Naive thymus-derived CD4-positive, alpha-beta T cell (primary cell): ENCODE measurements at regions of chr7 and their contacts with region 1.

Region 1: GRCh38 chr7:73578342-73579127 is at the start of gene TBL2:
- DNase-seq: peak; percentile 98 to 99 (median 98)
- ATAC-seq: peak; percentile 94
- H3K4me3 ChIP-seq: peak within 1 kb of the TSS; percentile 61
- H3K4me3 Mint-ChIP-seq: peak within 1 kb of the TSS; percentile 91 to 98 (median 96)
- H3K27ac ChIP-seq: peak within 1 kb of the TSS; percentile 88
- H3K27ac Mint-ChIP-seq: peak within 1 kb of the TSS; percentile 97 to 99 (median 98)
- H3K4me1 ChIP-seq: peaks cover 13 to 14% of the 10 kb centered on the region in 2 donors
- H3K4me1 Mint-ChIP-seq: peaks cover 14 to 35% (median 31%) of the 10 kb centered on the region in 7 donors
- H3K27me3 ChIP-seq: no peaks in the 10 kb centered on the region
- H3K27me3 Mint-ChIP-seq: no peaks in the 10 kb centered on the region
- total RNA-seq, gene TBL2: 19.2 to 40.9 (median 32.8) TPM

Region 2: GRCh38 chr7:73557108-73557396 is 21.5 kb before region 1 on chr7:
- CTCF ChIA-PET with region 1: no interaction called
- POLR2A ChIA-PET with region 1: interaction called, 33 read pairs
- intact Hi-C with region 1: loop called (anchors 1 kb)
- DNase-seq: peak; percentile 86 to 95 (median 91)
- ATAC-seq: peak; percentile 93
- H3K4me3 ChIP-seq: peak overlapping the region; percentile 81
- H3K4me3 Mint-ChIP-seq: peak overlapping the region; percentile 88 to 97 (median 93)
- H3K27ac ChIP-seq: peak overlapping the region; percentile 100
- H3K27ac Mint-ChIP-seq: peak overlapping the region; percentile 92 to 98 (median 95)
- H3K4me1 ChIP-seq: peaks cover 17 to 23% of the 10 kb centered on the region in 2 donors
- H3K4me1 Mint-ChIP-seq: peaks cover 24 to 41% (median 33%) of the 10 kb centered on the region in 7 donors
- H3K27me3 ChIP-seq: no peaks in the 10 kb centered on the region
- H3K27me3 Mint-ChIP-seq: no peaks in the 10 kb centered on the region

Region 3: DNA sequence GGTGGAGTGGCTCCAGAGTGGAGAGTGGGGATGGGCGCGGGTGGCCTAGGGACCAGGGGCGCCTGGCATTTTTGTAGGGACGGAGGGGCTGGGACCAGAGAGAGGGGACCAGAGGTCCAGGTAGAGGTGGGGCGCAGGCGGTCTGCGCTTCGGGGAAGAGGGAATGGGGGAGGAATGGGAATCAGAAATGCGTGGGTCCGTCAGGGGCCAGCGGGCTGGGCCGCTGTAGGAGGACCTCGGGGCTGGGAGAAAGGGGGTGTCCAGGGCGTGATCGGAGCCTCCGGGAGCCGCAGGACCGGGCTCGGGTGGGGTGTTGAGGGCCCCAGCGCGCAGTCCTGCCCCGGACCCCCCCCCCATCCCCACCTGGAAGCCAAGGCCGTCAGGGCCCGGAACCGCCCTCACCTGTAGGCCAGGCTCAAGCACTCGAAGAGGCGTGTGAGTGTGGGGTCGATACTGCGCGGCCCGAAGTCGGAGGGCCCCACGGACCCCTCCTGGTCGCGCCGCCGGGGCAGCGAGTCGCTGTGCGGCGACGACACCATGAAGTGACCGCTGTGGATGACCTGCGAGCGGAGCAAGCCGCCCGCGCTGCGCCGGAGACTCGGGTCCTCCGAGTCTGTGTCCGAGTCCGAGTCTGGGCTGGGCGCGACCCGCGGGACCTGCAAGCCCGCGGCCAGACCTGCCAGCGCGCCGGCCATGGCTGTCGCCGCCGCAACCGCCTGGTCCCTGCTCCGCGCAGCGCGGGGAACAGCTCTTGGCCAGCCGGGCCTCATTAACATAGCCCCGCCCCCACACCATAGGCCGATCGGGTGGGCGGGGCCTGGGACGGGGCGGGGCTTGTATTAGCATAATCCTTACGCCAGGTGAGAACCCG is 45.5 kb after region 1 on chr7 and contains the start of gene MLXIPL:
- CTCF ChIA-PET with region 1: no interaction called
- POLR2A ChIA-PET with region 1: no interaction called
- intact Hi-C with region 1: loop called in 1 of 2 experiments (anchors 1 kb)
- DNase-seq: peak in 7 of 9 donors; percentile 16 to 68 (median 30)
- ATAC-seq: peak; percentile 89
- H3K4me3 ChIP-seq: no peak within 1 kb of the TSS
- H3K4me3 Mint-ChIP-seq: peak within 1 kb of the TSS; percentile 25 to 78 (median 60)
- H3K27ac ChIP-seq: no peak within 1 kb of the TSS
- H3K27ac Mint-ChIP-seq: peak within 1 kb of the TSS in 1 of 9 donors; percentile 50
- H3K4me1 ChIP-seq: no peaks in the 10 kb centered on the region
- H3K4me1 Mint-ChIP-seq: peaks cover 0 to 9% (median 5%) of the 10 kb centered on the region in 7 donors
- H3K27me3 ChIP-seq: peaks cover 0 to 10% of the 10 kb centered on the region in 2 donors
- H3K27me3 Mint-ChIP-seq: peaks cover 38 to 74% (median 44%) of the 10 kb centered on the region in 5 donors
- total RNA-seq, gene MLXIPL: not detected

Region 4: GRCh38 chr7:73683056-73683964 is 104.8 kb after region 1 on chr7 and contains the starts of genes BUD23 and DNAJC30:
- CTCF ChIA-PET with region 1: no interaction called
- POLR2A ChIA-PET with region 1: interaction called, 4 read pairs
- intact Hi-C with region 1: loop called (anchors 1 to 2 kb)
- DNase-seq: peak; percentile 77 to 97 (median 88)
- ATAC-seq: peak; percentile 98
- H3K4me3 ChIP-seq: peak within 1 kb of the TSS; percentile 97
- H3K4me3 Mint-ChIP-seq: peak within 1 kb of the TSS; percentile 91 to 98 (median 96)
- H3K27ac ChIP-seq: peak within 1 kb of the TSS; percentile 91
- H3K27ac Mint-ChIP-seq: peak within 1 kb of the TSS; percentile 91 to 97 (median 95)
- H3K4me1 ChIP-seq: peaks cover 17% of the 10 kb centered on the region in 2 donors
- H3K4me1 Mint-ChIP-seq: peaks cover 17 to 62% (median 42%) of the 10 kb centered on the region in 7 donors
- H3K27me3 ChIP-seq: no peaks in the 10 kb centered on the region
- H3K27me3 Mint-ChIP-seq: no peaks in the 10 kb centered on the region
- total RNA-seq, gene BUD23: 50.5 to 107 (median 72.0) TPM
- total RNA-seq, gene DNAJC30: 9.5 to 22.4 (median 13.4) TPM

Region 5: DNA sequence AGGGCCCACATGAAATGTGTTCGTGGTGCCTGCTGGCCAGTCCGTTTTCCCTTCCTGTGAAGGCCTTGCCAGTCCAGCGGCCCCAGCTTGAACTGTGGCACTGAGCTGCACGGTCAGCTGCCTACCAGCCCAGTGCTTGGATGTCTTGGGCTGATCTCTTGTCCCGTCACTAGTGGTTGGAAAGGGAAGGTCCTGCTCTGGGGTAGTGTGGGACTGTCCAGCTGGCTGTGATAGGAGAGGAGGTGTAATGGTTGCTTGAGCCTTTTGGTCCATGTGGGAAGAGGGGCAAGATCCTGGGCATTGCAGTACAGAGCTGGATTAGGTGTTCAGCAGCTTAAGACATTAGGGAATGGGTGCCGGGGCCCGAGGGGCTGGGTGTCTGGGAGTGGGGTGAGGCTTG is 119.9 kb after region 1 on chr7:
- CTCF ChIA-PET with region 1: no interaction called
- POLR2A ChIA-PET with region 1: no interaction called
- intact Hi-C with region 1: no loop called
- DNase-seq: no peak
- ATAC-seq: no peak
- H3K4me3 ChIP-seq: no peak overlapping the region
- H3K4me3 Mint-ChIP-seq: no peak overlapping the region
- H3K27ac ChIP-seq: no peak overlapping the region
- H3K27ac Mint-ChIP-seq: peak overlapping the region in 1 of 9 donors; percentile 38
- H3K4me1 ChIP-seq: no peaks in the 10 kb centered on the region
- H3K4me1 Mint-ChIP-seq: peaks cover 0 to 8% (median 6%) of the 10 kb centered on the region in 7 donors
- H3K27me3 ChIP-seq: no peaks in the 10 kb centered on the region
- H3K27me3 Mint-ChIP-seq: no peaks in the 10 kb centered on the region

Region 6: GRCh38 chr7:73842247-73842895 is 263.8 kb after region 1 on chr7 and contains the start of gene METTL27:
- CTCF ChIA-PET with region 1: no interaction called
- POLR2A ChIA-PET with region 1: no interaction called
- intact Hi-C with region 1: loop called in 1 of 2 experiments (anchors 10 kb)
- DNase-seq: peak; percentile 70 to 89 (median 87)
- ATAC-seq: peak; percentile 99
- H3K4me3 ChIP-seq: peak within 1 kb of the TSS; percentile 68
- H3K4me3 Mint-ChIP-seq: peak within 1 kb of the TSS; percentile 82 to 91 (median 89)
- H3K27ac ChIP-seq: peak within 1 kb of the TSS; percentile 73
- H3K27ac Mint-ChIP-seq: peak within 1 kb of the TSS; percentile 53 to 84 (median 77)
- H3K4me1 ChIP-seq: peaks cover 5 to 11% of the 10 kb centered on the region in 2 donors
- H3K4me1 Mint-ChIP-seq: peaks cover 0 to 19% (median 13%) of the 10 kb centered on the region in 7 donors
- H3K27me3 ChIP-seq: no peaks in the 10 kb centered on the region
- H3K27me3 Mint-ChIP-seq: peaks cover 0 to 12% (median 0%) of the 10 kb centered on the region in 5 donors
- total RNA-seq, gene METTL27: 1.8 to 7.4 (median 3.3) TPM

Region 7: DNA sequence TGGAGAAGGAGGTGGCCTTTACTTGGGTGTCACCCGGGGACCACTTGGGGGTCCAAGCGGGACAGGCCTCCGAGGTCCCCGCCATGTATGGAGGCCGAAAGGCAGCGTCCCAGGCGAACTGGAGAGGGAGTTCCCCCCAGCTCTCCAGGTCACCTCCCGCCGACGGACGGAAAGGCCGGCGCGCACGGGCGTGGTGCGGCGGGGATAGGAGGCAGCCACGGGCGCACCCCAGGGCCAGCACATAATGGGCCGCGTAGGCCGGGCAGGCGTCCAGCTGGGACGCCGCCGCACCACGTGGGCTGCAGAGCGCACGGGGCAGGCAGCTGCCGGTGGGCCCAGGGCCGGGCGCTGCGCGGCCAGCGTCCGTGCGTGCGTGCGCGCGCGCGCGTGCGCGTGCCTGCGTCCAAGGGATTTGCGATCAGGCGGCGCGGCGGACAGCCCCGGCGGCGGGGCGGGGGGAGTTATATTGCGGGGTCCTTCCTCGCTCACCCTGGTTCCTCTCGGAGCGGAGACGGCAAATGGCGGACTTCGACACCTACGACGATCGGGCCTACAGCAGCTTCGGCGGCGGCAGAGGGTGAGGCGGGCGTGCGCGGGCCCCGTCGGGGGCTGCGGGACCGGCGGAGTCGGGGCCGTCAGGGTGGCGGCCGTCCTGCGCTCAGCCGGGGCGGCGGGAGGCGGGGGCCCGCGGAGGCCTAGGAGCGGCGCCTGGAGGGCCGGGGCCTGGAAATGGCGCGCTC is 595.5 kb after region 1 on chr7 and contains the start of gene EIF4H:
- CTCF ChIA-PET with region 1: no interaction called
- POLR2A ChIA-PET with region 1: no interaction called
- intact Hi-C with region 1: loop called in 1 of 2 experiments (anchors 10 kb)
- DNase-seq: peak; percentile 90 to 97 (median 95)
- ATAC-seq: peak; percentile 97
- H3K4me3 ChIP-seq: peak within 1 kb of the TSS; percentile 87
- H3K4me3 Mint-ChIP-seq: peak within 1 kb of the TSS; percentile 86 to 98 (median 92)
- H3K27ac ChIP-seq: peak within 1 kb of the TSS; percentile 99
- H3K27ac Mint-ChIP-seq: peak within 1 kb of the TSS; percentile 88 to 97 (median 94)
- H3K4me1 ChIP-seq: peaks cover 41 to 43% of the 10 kb centered on the region in 2 donors
- H3K4me1 Mint-ChIP-seq: peaks cover 32 to 57% (median 47%) of the 10 kb centered on the region in 7 donors
- H3K27me3 ChIP-seq: no peaks in the 10 kb centered on the region
- H3K27me3 Mint-ChIP-seq: no peaks in the 10 kb centered on the region
- total RNA-seq, gene EIF4H: 163 to 284 (median 223) TPM